ENCODE measurements at regions of chr5 and their contacts with region 1.

Region 1: GRCh38 chr5:176948458-176948857 is 49.3 kb upstream of the HK3 start:
- DNase-seq: no peak
- ATAC-seq: no peak
- H3K4me3 ChIP-seq: no peak overlapping the region
- H3K4me3 Mint-ChIP-seq: no peak overlapping the region
- H3K27ac ChIP-seq: no peak overlapping the region
- H3K27ac Mint-ChIP-seq: no peak overlapping the region
- H3K4me1 ChIP-seq: no peaks in the 10 kb centered on the region
- H3K4me1 Mint-ChIP-seq: no peaks in the 10 kb centered on the region
- H3K27me3 ChIP-seq: no peaks in the 10 kb centered on the region
- H3K27me3 Mint-ChIP-seq: no peaks in the 10 kb centered on the region

Region 2: GRCh38 chr5:176679365-176680225 is 268.9 kb before region 1 on chr5:
- CTCF ChIA-PET with region 1: interaction called in 1 of 2 experiments, 11 read pairs
- POLR2A ChIA-PET with region 1: no interaction called
- DNase-seq: no peak
- ATAC-seq: no peak
- H3K4me3 ChIP-seq: no peak overlapping the region
- H3K4me3 Mint-ChIP-seq: no peak overlapping the region
- H3K27ac ChIP-seq: no peak overlapping the region
- H3K27ac Mint-ChIP-seq: no peak overlapping the region
- H3K4me1 ChIP-seq: no peaks in the 10 kb centered on the region
- H3K4me1 Mint-ChIP-seq: no peaks in the 10 kb centered on the region
- H3K27me3 ChIP-seq: peaks cover 13 to 68% of the 10 kb centered on the region in 2 experiments
- H3K27me3 Mint-ChIP-seq: peaks cover 51 to 60% of the 10 kb centered on the region in 2 donors

Region 3: DNA sequence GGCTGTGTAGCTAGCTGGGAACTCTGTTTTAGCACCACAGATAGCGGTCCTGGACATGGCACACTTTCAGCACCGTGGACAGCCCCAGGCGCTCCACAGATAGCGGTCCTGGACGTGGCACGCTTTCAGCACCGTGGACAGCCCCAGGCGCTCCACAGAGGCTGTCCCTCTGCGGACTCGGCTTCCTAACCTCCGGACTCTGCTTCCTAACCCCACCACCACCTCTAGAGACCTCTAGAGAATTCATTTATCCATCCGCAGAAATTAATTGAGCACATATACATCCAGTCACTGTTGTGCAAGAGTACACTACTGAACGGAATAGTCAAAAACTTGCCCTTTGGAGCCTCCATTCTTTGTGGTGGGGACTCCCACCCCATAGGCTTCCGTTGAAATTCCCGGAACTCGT is 110.7 kb before region 1 on chr5:
- CTCF ChIA-PET with region 1: no interaction called
- POLR2A ChIA-PET with region 1: interaction called in 1 of 2 experiments, 11 read pairs
- DNase-seq: peak; percentile 14 to 81 (median 67)
- ATAC-seq: peak; percentile 71 to 82 (median 74)
- H3K4me3 ChIP-seq: no peak overlapping the region
- H3K4me3 Mint-ChIP-seq: no peak overlapping the region
- H3K27ac ChIP-seq: no peak overlapping the region
- H3K27ac Mint-ChIP-seq: no peak overlapping the region
- H3K4me1 ChIP-seq: no peaks in the 10 kb centered on the region
- H3K4me1 Mint-ChIP-seq: no peaks in the 10 kb centered on the region
- H3K27me3 ChIP-seq: peaks cover 0 to 62% of the 10 kb centered on the region in 2 experiments
- H3K27me3 Mint-ChIP-seq: peaks cover 21 to 47% of the 10 kb centered on the region in 2 donors

Region 4: GRCh38 chr5:177327539-177328522 is 379.4 kb after region 1 on chr5:
- CTCF ChIA-PET with region 1: no interaction called
- POLR2A ChIA-PET with region 1: no interaction called
- DNase-seq: peak in 1 of 35 experiments; percentile 40
- ATAC-seq: peak; percentile 57 to 71 (median 70)
- H3K4me3 ChIP-seq: no peak overlapping the region
- H3K4me3 Mint-ChIP-seq: peak overlapping the region; percentile 29 to 43 (median 31)
- H3K27ac ChIP-seq: peak overlapping the region; percentile 47
- H3K27ac Mint-ChIP-seq: peak overlapping the region; percentile 29 to 82
- H3K4me1 ChIP-seq: peaks cover 0 to 31% of the 10 kb centered on the region in 2 experiments
- H3K4me1 Mint-ChIP-seq: peaks cover 0 to 16% (median 6%) of the 10 kb centered on the region in 3 donors
- H3K27me3 ChIP-seq: no peaks in the 10 kb centered on the region
- H3K27me3 Mint-ChIP-seq: no peaks in the 10 kb centered on the region